Right cardiac atrium (tissue), 5 donors: ENCODE measurements at regions of chr15 and their contacts with region 1.

Region 1: DNA sequence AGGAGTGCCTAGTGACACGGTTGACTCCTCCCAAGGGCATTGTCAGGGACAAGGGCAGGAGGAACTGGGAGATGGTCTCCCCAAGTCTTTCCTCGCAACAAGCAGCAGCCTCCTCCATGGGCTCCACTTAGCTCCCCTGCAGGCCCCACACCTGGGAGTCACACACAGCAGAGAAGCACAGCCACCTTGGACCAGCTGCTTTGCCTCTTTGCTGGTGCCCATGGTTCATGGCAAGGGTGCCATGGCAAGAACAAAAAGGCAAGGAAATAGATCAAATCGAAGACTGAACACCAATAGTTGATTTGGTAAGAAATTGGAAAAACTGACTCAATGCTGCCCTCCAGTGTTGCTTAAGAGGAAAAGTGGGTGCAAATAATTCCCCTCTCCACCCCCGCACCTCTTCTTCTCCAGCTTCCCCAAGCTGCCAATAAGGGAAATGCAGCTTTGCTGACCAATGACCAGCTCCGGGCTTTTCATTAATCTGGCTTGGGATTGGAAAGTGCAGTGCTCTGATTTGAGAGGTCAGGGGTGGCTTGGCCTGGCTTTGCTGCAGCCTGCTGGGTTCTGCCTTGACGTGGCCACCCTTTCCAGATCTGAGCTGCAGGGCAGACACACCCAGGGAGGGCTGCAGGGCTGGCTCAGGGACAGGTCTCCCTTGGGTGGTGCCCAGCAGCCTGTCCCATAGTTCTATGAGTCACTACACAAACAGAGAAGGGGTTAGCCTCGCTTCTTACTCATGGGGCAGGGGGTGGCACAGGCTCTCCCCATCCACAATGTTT is 162.0 kb downstream of the KLF13 start:
- DNase-seq: peak; percentile 64 to 89 (median 84)
- ATAC-seq: peak; percentile 86 to 94
- H3K4me3 ChIP-seq: no peak overlapping the region
- H3K27ac ChIP-seq: peak overlapping the region; percentile 70
- H3K4me1 ChIP-seq: peaks cover 3% of the 10 kb centered on the region
- H3K27me3 ChIP-seq: no peaks in the 10 kb centered on the region

Region 2: GRCh38 chr15:30985081-30985531 is 503.5 kb before region 1 on chr15:
- intact Hi-C with region 1: loop called in 1 of 4 experiments (anchors 10 kb)
- DNase-seq: peak in 1 of 3 donors; percentile 63
- ATAC-seq: peak; percentile 46 to 54
- H3K4me3 ChIP-seq: no peak overlapping the region
- H3K27ac ChIP-seq: peak overlapping the region; percentile 87
- H3K4me1 ChIP-seq: peaks cover 24% of the 10 kb centered on the region
- H3K27me3 ChIP-seq: no peaks in the 10 kb centered on the region

Region 3: DNA sequence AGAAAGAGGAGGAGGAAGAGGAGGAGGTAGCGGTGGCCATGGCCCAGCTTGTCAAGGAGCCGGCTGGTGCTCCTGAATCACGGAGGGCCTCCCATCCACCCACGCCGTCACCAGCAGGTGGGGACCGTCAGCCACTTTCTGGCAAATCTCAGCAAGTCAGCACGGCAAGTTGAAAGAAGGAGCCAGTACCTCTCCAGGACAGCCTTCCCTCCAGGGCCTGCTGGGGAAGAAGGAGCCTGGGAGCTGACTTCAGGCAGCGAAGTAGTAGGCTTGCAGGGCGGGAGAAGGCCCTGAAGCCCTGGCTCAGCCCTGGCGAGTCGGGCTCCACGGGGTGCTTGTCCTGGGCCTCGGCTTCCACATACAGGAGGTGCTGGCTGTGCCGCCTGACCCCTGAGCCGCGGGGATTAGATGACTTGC is 287.9 kb before region 1 on chr15:
- intact Hi-C with region 1: loop called (anchors 2 to 5 kb)
- DNase-seq: peak; percentile 74 to 94 (median 91)
- ATAC-seq: peak; percentile 89 to 93
- H3K4me3 ChIP-seq: no peak overlapping the region
- H3K27ac ChIP-seq: no peak overlapping the region
- H3K4me1 ChIP-seq: peaks cover 4% of the 10 kb centered on the region
- H3K27me3 ChIP-seq: no peaks in the 10 kb centered on the region

Region 4: DNA sequence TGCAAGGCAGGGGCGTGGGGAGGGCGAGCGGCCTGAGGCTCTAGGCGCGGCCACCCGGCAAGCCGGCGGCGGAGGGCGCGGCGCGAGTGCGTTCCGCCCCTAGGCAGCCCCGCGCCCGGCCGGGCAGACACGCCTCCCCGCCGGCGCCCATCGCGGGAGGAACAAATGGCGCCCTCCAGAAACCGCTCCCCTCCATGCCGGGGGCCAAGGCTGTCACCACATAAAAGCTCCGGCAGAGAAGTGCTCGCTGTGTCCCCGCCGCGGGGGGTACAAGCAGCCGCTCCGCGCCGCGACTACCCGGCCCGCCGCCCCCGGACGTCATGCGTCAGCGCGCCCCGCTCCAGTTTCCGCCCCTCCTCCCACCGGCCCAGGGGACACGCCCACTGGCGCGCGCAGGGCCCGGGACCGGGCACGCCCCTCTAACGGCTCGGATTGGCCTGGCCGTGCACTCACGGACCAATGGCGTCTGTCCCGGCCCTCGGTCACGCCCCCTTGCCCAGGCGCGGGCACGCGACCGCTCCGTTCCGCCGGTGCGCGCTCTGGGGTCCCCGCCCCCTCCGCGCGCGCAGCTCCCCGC is 162.4 kb before region 1 on chr15:
- intact Hi-C with region 1: loop called in 3 of 4 experiments (anchors 10 kb)
- DNase-seq: peak; percentile 94 to 100 (median 99)
- ATAC-seq: peak; percentile 93
- H3K4me3 ChIP-seq: peak overlapping the region; percentile 96
- H3K27ac ChIP-seq: peak overlapping the region; percentile 96
- H3K4me1 ChIP-seq: peaks cover 15% of the 10 kb centered on the region
- H3K27me3 ChIP-seq: no peaks in the 10 kb centered on the region

Region 5: GRCh38 chr15:31402511-31403056 is 86.0 kb before region 1 on chr15:
- intact Hi-C with region 1: loop called in 1 of 4 experiments (anchors 10 kb)
- DNase-seq: peak; percentile 77 to 94 (median 94)
- ATAC-seq: peak; percentile 84
- H3K4me3 ChIP-seq: no peak overlapping the region
- H3K27ac ChIP-seq: peak overlapping the region; percentile 50
- H3K4me1 ChIP-seq: peaks cover 11% of the 10 kb centered on the region
- H3K27me3 ChIP-seq: no peaks in the 10 kb centered on the region

Region 6: GRCh38 chr15:31435261-31435911 is 53.2 kb before region 1 on chr15:
- intact Hi-C with region 1: loop called in 2 of 4 experiments (anchors 5 kb)
- DNase-seq: peak; percentile 68 to 93 (median 90)
- ATAC-seq: peak; percentile 85 to 87
- H3K4me3 ChIP-seq: peak overlapping the region; percentile 6
- H3K27ac ChIP-seq: peak overlapping the region; percentile 71
- H3K4me1 ChIP-seq: peaks cover 4% of the 10 kb centered on the region
- H3K27me3 ChIP-seq: no peaks in the 10 kb centered on the region

Region 7: GRCh38 chr15:31442203-31443111 is 46.2 kb before region 1 on chr15:
- intact Hi-C with region 1: loop called in 2 of 4 experiments (anchors 5 kb)
- DNase-seq: peak in 1 of 3 donors; percentile 81
- ATAC-seq: peak; percentile 60 to 64
- H3K4me3 ChIP-seq: no peak overlapping the region
- H3K27ac ChIP-seq: no peak overlapping the region
- H3K4me1 ChIP-seq: no peaks in the 10 kb centered on the region
- H3K27me3 ChIP-seq: no peaks in the 10 kb centered on the region